CD4-positive, alpha-beta T cell (primary cell): ENCODE measurements at regions of chr18 and their contacts with region 1.

Region 1: GRCh38 chr18:59459369-59460079 is 100.5 kb upstream of the LMAN1 start:
- DNase-seq: peak in 1 of 14 experiments; percentile 6
- ATAC-seq: no peak
- H3K4me3 ChIP-seq: no peak overlapping the region
- H3K4me3 Mint-ChIP-seq: no peak overlapping the region
- H3K27ac ChIP-seq: no peak overlapping the region
- H3K27ac Mint-ChIP-seq: no peak overlapping the region
- H3K4me1 ChIP-seq: no peaks in the 10 kb centered on the region
- H3K4me1 Mint-ChIP-seq: no peaks in the 10 kb centered on the region
- H3K27me3 ChIP-seq: peaks cover 0 to 2% of the 10 kb centered on the region in 2 experiments
- H3K27me3 Mint-ChIP-seq: peaks cover 38% of the 10 kb centered on the region
- CTCF ChIP-seq: peak; percentile 49

Region 2: GRCh38 chr18:59502274-59503175 is 43.0 kb after region 1 on chr18:
- CTCF ChIA-PET with region 1: no interaction called
- POLR2A ChIA-PET with region 1: no interaction called
- intact Hi-C with region 1: no loop called
- DNase-seq: no peak
- ATAC-seq: no peak
- H3K4me3 ChIP-seq: no peak overlapping the region
- H3K4me3 Mint-ChIP-seq: no peak overlapping the region
- H3K27ac ChIP-seq: no peak overlapping the region
- H3K27ac Mint-ChIP-seq: no peak overlapping the region
- H3K4me1 ChIP-seq: no peaks in the 10 kb centered on the region
- H3K4me1 Mint-ChIP-seq: no peaks in the 10 kb centered on the region
- H3K27me3 ChIP-seq: peaks cover 0 to 2% of the 10 kb centered on the region in 2 experiments
- H3K27me3 Mint-ChIP-seq: peaks cover 6% of the 10 kb centered on the region
- CTCF ChIP-seq: no peak

Region 3: DNA sequence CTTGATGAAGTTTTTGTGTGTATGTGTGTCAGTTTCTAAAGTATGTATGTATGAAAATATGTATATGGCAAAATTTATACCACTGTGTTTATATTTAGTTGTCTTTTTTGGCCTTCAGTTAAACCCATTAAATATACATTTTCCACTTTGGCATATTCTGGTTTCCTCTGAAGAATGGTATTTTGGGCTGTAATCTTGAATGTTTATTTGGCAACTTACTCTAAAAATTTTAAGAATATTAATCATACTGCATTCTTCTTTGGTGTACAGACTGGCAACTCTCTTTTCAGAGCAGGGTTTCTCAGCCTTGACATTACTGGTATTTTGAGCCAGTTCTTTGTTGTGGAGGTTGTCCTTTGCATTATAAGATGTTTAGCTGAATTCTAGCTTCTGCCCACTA is 265.6 kb after region 1 on chr18:
- CTCF ChIA-PET with region 1: no interaction called
- POLR2A ChIA-PET with region 1: no interaction called
- intact Hi-C with region 1: no loop called
- DNase-seq: no peak
- ATAC-seq: no peak
- H3K4me3 ChIP-seq: no peak overlapping the region
- H3K4me3 Mint-ChIP-seq: no peak overlapping the region
- H3K27ac ChIP-seq: no peak overlapping the region
- H3K27ac Mint-ChIP-seq: no peak overlapping the region
- H3K4me1 ChIP-seq: no peaks in the 10 kb centered on the region
- H3K4me1 Mint-ChIP-seq: no peaks in the 10 kb centered on the region
- H3K27me3 ChIP-seq: no peaks in the 10 kb centered on the region
- H3K27me3 Mint-ChIP-seq: peaks cover 3% of the 10 kb centered on the region
- CTCF ChIP-seq: no peak

Region 4: DNA sequence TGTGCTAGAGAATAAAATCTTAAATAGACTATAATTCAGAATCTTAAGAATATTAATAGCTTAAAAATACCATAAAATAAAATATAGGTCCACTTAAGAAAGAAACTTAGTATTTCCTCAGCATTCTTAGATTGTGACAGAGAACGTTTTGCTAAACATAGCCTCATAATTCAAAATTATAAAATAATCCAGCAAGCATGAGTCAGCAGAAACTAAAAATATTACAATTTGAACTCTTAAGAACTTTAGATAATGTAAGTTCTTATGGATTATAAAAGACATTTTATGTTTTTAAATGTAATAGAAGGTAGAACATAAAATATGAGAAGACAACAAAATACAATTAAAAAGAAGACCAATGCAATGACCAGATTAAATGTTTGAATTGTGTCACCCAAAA is 1077.5 kb after region 1 on chr18:
- CTCF ChIA-PET with region 1: no interaction called
- POLR2A ChIA-PET with region 1: no interaction called
- intact Hi-C with region 1: loop called in 1 of 2 experiments (anchors 5 kb)
- DNase-seq: no peak
- ATAC-seq: no peak
- H3K4me3 ChIP-seq: no peak overlapping the region
- H3K4me3 Mint-ChIP-seq: no peak overlapping the region
- H3K27ac ChIP-seq: no peak overlapping the region
- H3K27ac Mint-ChIP-seq: no peak overlapping the region
- H3K4me1 ChIP-seq: no peaks in the 10 kb centered on the region
- H3K4me1 Mint-ChIP-seq: no peaks in the 10 kb centered on the region
- H3K27me3 ChIP-seq: no peaks in the 10 kb centered on the region
- H3K27me3 Mint-ChIP-seq: no peaks in the 10 kb centered on the region
- CTCF ChIP-seq: no peak